Endothelial cell of umbilical vein (primary cell): ENCODE measurements at regions of chr1 and their contacts with region 1.

Region 1: DNA sequence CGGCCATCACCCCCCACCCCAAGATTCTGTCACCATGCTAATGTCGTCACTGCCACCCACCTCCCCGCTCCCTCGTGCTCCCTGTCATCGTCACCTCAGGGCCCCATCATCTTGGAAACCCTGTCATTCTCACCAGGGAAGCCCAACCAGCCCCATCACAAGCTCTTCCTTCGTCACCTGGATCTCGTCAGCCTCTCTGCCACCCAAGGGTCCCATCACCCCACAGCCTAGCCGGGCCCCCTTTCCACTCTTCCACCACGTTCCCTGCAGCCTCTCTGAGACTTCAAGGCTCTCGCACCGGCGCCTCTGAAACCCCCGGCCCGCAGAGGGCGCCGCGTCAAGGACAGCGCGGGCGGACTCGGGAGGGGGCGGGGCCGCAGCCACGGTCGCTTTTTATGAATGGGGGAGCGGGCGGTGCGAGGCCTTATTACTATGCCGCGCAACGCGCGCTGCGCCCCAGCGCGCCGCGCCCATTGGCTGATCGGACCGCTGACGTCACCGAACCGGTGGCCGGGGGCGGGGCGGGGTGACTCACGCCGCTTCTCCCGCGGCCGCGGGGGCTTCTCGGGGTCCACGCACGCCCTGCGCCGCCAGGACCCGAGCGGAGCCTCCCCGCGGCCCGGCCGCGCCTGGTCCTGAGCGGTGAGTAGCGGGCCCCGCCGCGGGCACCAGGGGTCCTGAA is at the start of gene GPR3:
- DNase-seq: peak; percentile 93
- H3K4me3 ChIP-seq: peak within 1 kb of the TSS; percentile 46 to 80 (median 70)
- H3K27ac ChIP-seq: peak within 1 kb of the TSS; percentile 73
- H3K4me1 ChIP-seq: peaks cover 21% of the 10 kb centered on the region
- H3K27me3 ChIP-seq: no peaks in the 10 kb centered on the region
- CTCF ChIP-seq: peak; percentile 66 to 72
- POLR2A ChIP-seq: no peak
- total RNA-seq, gene GPR3: 1.8 and 2.4 TPM in 2 replicates

Region 2: DNA sequence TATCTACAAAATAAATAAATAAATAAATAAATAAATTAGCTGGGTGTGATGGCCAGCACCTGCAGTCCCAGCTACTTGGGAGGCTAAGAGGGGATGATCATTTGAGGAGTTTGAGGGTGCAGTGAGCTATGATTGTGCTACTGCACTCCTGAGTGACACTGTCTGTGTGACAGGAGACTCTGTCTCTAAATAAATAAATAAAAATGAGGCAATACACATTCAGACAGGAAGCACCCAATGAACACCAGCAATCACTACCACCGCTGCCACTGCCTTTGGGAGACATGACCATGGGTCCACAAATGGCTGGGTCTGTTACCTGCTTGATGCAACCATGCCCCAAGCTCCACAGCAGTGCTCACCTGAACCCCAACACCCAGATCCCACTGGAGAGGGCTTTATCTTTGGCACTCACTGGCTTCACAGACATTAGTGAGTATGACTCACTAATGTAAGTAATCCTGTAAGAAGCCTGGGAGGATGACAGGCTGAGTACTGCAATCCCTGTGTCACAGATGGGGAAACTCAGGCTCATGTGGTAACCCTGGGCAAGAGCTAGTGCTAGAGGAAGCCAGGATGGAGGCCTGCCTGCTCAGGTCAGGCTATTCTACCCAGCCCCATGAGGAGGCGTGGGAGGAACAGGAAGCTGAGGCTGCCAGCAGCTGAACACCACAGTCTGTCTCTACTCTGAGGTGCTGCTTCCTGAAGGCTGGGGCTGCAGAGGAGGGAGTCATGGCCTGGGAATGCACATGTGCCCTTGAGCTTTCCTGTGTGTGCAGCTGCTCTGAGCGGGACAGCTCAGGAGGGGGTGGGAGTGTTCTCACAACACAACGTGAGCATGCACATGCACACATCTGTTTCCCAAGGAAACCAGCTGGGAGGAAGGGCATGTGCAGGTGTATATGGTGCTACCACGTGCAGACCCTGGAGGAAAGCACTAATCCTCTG is 280.3 kb before region 1 on chr1:
- CTCF ChIA-PET with region 1: no interaction called
- POLR2A ChIA-PET with region 1: no interaction called
- dilution Hi-C with region 1: no loop called
- intact Hi-C with region 1: loop called (anchors 10 kb)
- DNase-seq: peak; percentile 99
- H3K4me3 ChIP-seq: no peak overlapping the region
- H3K27ac ChIP-seq: peak overlapping the region; percentile 78
- H3K4me1 ChIP-seq: peaks cover 34% of the 10 kb centered on the region
- H3K27me3 ChIP-seq: no peaks in the 10 kb centered on the region
- CTCF ChIP-seq: peak; percentile 29 to 33
- POLR2A ChIP-seq: no peak

Region 3: DNA sequence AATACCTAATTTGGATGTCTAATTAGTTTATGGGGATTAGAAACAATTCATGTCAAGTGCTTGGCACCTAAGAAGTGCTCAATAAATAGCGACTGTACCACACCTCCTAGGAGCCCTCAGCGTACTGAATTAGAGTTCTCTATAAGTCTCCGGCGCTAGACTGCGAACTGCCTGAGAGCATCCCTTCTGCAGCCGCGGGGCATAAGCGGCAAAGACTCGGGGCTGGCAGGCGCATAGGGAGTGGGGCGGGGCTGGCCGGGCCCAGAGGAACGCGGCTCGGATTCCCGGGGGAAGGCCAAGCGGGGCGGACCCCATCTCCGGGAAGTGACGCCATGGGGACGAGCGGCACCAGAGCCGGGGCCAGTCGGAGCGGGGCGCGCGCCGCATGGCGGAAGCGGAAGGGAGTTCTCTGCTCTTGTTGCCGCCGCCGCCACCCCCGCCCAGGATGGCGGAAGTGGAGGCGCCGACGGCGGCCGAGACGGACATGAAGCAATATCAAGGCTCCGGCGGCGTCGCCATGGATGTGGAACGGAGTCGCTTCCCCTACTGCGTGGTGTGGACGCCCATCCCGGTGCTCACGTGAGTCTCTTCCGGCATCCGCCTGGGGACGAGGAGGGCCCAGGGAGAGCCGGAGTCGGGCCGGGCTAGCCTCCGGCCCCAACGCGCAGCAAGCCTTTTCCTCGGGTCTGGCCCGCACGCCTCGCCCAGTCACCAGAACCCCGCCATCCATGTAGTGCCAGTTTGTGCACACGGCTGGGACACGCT is 70.2 kb before region 1 on chr1 and contains the start of gene TMEM222:
- CTCF ChIA-PET with region 1: interaction called, 3 read pairs
- POLR2A ChIA-PET with region 1: no interaction called
- dilution Hi-C with region 1: no loop called
- intact Hi-C with region 1: loop called (anchors 5 kb)
- DNase-seq: peak; percentile 97
- H3K4me3 ChIP-seq: peak within 1 kb of the TSS; percentile 47 to 82 (median 68)
- H3K27ac ChIP-seq: peak within 1 kb of the TSS; percentile 77
- H3K4me1 ChIP-seq: peaks cover 11% of the 10 kb centered on the region
- H3K27me3 ChIP-seq: no peaks in the 10 kb centered on the region
- CTCF ChIP-seq: no peak
- POLR2A ChIP-seq: peak; percentile 94
- total RNA-seq, gene TMEM222: 43.1 and 45.8 TPM in 2 replicates

Region 4: GRCh38 chr1:27349784-27350662 is 42.2 kb before region 1 on chr1:
- CTCF ChIA-PET with region 1: interaction called, 15 read pairs
- POLR2A ChIA-PET with region 1: no interaction called
- dilution Hi-C with region 1: no loop called
- intact Hi-C with region 1: no loop called
- DNase-seq: peak; percentile 69
- H3K4me3 ChIP-seq: peak overlapping the region in 1 of 3 experiments; percentile 31
- H3K27ac ChIP-seq: no peak overlapping the region
- H3K4me1 ChIP-seq: peaks cover 7% of the 10 kb centered on the region
- H3K27me3 ChIP-seq: peaks cover 2 to 5% of the 10 kb centered on the region in 2 experiments
- CTCF ChIP-seq: no peak
- POLR2A ChIP-seq: no peak

Region 5: DNA sequence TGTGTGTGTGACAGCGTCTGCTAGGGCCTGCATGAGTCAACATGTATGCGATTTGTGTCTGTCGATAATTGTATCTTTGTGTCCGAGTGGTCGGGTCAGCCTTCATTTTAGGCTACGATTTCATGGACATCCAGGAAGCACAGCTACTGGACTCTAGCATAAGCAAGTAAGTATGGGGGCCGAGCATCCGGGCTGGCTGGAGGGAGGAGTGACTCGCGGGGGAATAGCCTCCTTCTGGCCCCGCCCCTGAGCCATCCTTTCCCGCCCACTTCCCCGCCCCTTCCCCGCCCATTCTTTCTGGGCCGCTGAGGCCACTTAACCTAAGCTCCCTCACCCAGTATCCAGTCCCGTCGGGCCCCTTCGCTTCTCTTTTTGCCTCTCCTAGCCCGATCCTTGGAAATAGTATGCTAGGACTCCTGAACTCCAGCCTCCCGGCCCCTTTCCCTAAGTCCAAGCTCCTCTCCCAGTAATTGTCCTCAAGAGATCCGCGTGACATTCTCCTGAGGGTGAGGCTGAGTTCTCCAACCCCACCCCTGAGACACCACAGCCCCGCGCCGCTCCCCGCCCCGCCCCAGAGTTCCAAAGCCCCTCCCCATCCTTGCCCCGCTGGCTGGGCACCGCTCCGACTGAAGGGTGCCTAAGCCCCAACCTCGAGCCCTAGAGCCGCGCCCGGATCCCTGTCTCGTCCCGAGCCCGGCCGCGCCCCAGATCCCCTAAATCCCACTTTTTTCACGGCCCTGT is 26.7 kb before region 1 on chr1:
- CTCF ChIA-PET with region 1: interaction called, 34 read pairs
- POLR2A ChIA-PET with region 1: interaction called, 3 read pairs
- dilution Hi-C with region 1: no loop called
- intact Hi-C with region 1: loop called (anchors 1 kb)
- DNase-seq: peak; percentile 91
- H3K4me3 ChIP-seq: peak overlapping the region; percentile 62 to 81 (median 79)
- H3K27ac ChIP-seq: peak overlapping the region; percentile 85
- H3K4me1 ChIP-seq: peaks cover 15% of the 10 kb centered on the region
- H3K27me3 ChIP-seq: no peaks in the 10 kb centered on the region
- CTCF ChIP-seq: no peak
- POLR2A ChIP-seq: peak; percentile 41